ENCODE measurements at regions of chr5 and their contacts with region 1.

Region 1: GRCh38 chr5:103582364-103582763 is 19.8 kb upstream of the NUDT12 start:
- DNase-seq: peak; percentile 32
- H3K4me3 ChIP-seq: no peak overlapping the region
- H3K27ac ChIP-seq: no peak overlapping the region
- H3K4me1 ChIP-seq: no peaks in the 10 kb centered on the region
- H3K27me3 ChIP-seq: no peaks in the 10 kb centered on the region
- CTCF ChIP-seq: peak; percentile 52 to 57

Region 2: GRCh38 chr5:103894882-103895281 is 312.5 kb after region 1 on chr5:
- CTCF ChIA-PET with region 1: no interaction called
- dilution Hi-C with region 1: no loop called
- in situ Hi-C with region 1: no loop called
- intact Hi-C with region 1: no loop called
- DNase-seq: no peak
- H3K4me3 ChIP-seq: no peak overlapping the region
- H3K27ac ChIP-seq: no peak overlapping the region
- H3K4me1 ChIP-seq: no peaks in the 10 kb centered on the region
- H3K27me3 ChIP-seq: no peaks in the 10 kb centered on the region
- CTCF ChIP-seq: no peak

Region 3: GRCh38 chr5:104170926-104171325 is 588.6 kb after region 1 on chr5:
- CTCF ChIA-PET with region 1: no interaction called
- dilution Hi-C with region 1: loop called (anchors 25 kb)
- in situ Hi-C with region 1: loop called (anchors 10 to 25 kb)
- intact Hi-C with region 1: no loop called
- DNase-seq: no peak
- H3K4me3 ChIP-seq: no peak overlapping the region
- H3K27ac ChIP-seq: no peak overlapping the region
- H3K4me1 ChIP-seq: no peaks in the 10 kb centered on the region
- H3K27me3 ChIP-seq: no peaks in the 10 kb centered on the region
- CTCF ChIP-seq: no peak